ENCODE measurements at regions of chr11 and their contacts with region 1.

Region 1: DNA sequence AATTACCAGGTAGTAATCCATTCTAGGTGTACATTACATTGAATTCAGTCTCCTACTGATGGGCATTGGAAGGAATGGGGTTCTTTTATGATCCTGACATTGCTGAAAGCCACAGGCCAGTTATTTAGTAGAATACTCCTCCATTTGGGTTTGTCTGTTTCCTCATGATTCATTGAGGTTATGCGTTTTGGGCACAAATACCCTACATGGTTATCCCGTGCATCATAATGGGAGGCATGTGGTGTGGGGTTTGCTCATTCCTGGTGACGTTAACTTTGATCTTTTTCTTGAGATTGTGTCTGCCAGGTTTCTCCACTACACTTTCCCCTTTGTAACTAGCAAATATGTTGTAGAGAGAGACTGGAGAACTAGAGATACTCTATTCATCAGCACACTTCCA is 5.5 kb downstream of the FOLR3 start:
- DNase-seq: peak; percentile 45
- ATAC-seq: peak; percentile 60
- H3K4me3 Mint-ChIP-seq: no peak overlapping the region
- H3K27ac Mint-ChIP-seq: peak overlapping the region; percentile 9
- H3K4me1 Mint-ChIP-seq: peaks cover 17% of the 10 kb centered on the region
- H3K27me3 Mint-ChIP-seq: peaks cover 4% of the 10 kb centered on the region
- CTCF ChIP-seq: no peak

Region 2: GRCh38 chr11:71977743-71978418 is 163.2 kb before region 1 on chr11:
- CTCF ChIA-PET with region 1: interaction called, 20 read pairs
- POLR2A ChIA-PET with region 1: interaction called, 3 read pairs
- intact Hi-C with region 1: no loop called
- DNase-seq: peak; percentile 72
- ATAC-seq: peak; percentile 65
- H3K4me3 Mint-ChIP-seq: no peak overlapping the region
- H3K27ac Mint-ChIP-seq: no peak overlapping the region
- H3K4me1 Mint-ChIP-seq: no peaks in the 10 kb centered on the region
- H3K27me3 Mint-ChIP-seq: no peaks in the 10 kb centered on the region
- CTCF ChIP-seq: peak; percentile 65

Region 3: GRCh38 chr11:72102946-72103753 is 37.9 kb before region 1 on chr11 and contains the start of gene LAMTOR1:
- CTCF ChIA-PET with region 1: interaction called, 15 read pairs
- POLR2A ChIA-PET with region 1: no interaction called
- intact Hi-C with region 1: no loop called
- DNase-seq: peak; percentile 100
- ATAC-seq: peak; percentile 97
- H3K4me3 Mint-ChIP-seq: peak within 1 kb of the TSS; percentile 95
- H3K27ac Mint-ChIP-seq: peak within 1 kb of the TSS; percentile 96
- H3K4me1 Mint-ChIP-seq: peaks cover 37% of the 10 kb centered on the region
- H3K27me3 Mint-ChIP-seq: no peaks in the 10 kb centered on the region
- CTCF ChIP-seq: no peak
- total RNA-seq, gene LAMTOR1: 50.3 to 52.4 TPM

Region 4: DNA sequence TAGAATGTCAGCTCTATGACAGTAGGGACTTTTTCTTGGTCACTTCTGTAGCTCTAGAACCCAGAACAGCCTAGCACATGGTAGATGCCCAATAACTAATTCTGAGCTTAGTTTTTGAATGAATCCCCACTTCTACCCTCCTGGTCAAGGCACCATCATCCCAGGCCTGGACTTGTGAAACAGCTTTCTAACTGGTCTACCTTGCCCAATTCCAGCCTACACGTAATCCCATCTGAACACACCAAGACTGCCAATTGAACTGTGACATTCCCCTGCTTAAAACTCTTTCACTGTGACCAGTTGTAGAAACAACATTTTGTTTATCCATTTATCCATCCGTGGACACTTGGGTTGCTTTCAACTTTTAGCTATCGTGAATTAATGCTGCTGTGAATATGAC is 11.7 kb before region 1 on chr11:
- CTCF ChIA-PET with region 1: interaction called, 20 read pairs
- POLR2A ChIA-PET with region 1: no interaction called
- intact Hi-C with region 1: no loop called
- DNase-seq: no peak
- ATAC-seq: no peak
- H3K4me3 Mint-ChIP-seq: no peak overlapping the region
- H3K27ac Mint-ChIP-seq: no peak overlapping the region
- H3K4me1 Mint-ChIP-seq: no peaks in the 10 kb centered on the region
- H3K27me3 Mint-ChIP-seq: peaks cover 13% of the 10 kb centered on the region
- CTCF ChIP-seq: no peak

Region 5: DNA sequence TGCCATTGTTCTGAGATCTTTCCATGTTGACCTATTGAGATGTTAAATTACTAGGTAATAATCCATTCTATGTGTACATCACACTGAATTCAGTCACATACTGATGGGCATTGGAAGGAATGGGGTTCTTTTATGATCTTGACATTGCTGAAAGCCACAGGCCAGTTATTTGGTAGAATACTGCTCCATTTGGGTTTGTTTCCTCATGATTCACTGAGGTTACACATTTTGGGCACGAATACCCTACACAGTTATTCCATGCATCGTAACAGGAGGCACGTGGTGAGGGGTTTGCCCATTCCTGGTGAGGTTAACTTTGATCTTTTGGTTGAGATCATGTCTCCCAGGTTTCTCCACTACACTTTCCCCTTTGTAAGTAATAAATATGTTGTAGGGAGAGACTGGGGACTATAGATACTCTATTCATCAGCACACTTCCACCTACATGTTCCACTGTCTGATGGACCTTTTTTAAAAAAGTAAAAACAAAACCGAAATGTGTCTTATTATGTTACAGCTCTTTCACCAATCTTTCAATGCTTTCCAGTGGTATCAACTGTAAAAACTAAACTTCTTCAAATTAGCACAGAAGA is 38.8 kb after region 1 on chr11:
- CTCF ChIA-PET with region 1: interaction called, 11 read pairs
- POLR2A ChIA-PET with region 1: no interaction called
- intact Hi-C with region 1: no loop called
- DNase-seq: no peak
- ATAC-seq: no peak
- H3K4me3 Mint-ChIP-seq: no peak overlapping the region
- H3K27ac Mint-ChIP-seq: no peak overlapping the region
- H3K4me1 Mint-ChIP-seq: peaks cover 5% of the 10 kb centered on the region
- H3K27me3 Mint-ChIP-seq: peaks cover 5% of the 10 kb centered on the region
- CTCF ChIP-seq: no peak

Region 6: GRCh38 chr11:72265951-72266350 is 124.9 kb after region 1 on chr11:
- CTCF ChIA-PET with region 1: interaction called, 10 read pairs
- POLR2A ChIA-PET with region 1: no interaction called
- intact Hi-C with region 1: no loop called
- DNase-seq: no peak
- ATAC-seq: no peak
- H3K4me3 Mint-ChIP-seq: no peak overlapping the region
- H3K27ac Mint-ChIP-seq: no peak overlapping the region
- H3K4me1 Mint-ChIP-seq: peaks cover 2% of the 10 kb centered on the region
- H3K27me3 Mint-ChIP-seq: peaks cover 16% of the 10 kb centered on the region
- CTCF ChIP-seq: no peak